ENCODE measurements at regions of chr9 and their contacts with region 1.

Region 1: DNA sequence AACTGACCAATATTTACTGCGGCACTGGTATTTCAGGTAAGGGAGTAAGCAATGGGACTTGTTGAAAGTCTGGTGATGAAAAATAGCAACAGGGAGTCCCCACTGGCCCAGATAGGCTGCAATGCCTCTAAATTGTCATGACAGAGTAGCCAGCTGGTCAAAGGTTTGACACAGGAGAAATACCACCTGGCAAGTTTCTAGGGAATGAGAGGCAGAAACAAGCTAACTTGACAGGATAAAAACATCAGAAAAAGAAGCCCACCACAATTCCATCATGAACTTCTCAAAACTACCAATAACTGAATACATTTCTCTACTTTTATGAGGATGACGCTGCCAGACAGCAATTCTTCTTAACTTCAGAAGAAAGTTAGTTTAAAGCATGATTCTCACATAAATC is 99.8 kb downstream of the STRBP start:
- DNase-seq: peak; percentile 48
- H3K4me3 ChIP-seq: peak overlapping the region; percentile 39
- H3K27ac ChIP-seq: peak overlapping the region; percentile 99
- H3K4me1 ChIP-seq: peaks cover 100% of the 10 kb centered on the region
- CTCF ChIP-seq: no peak

Region 2: GRCh38 chr9:123135430-123135829 is 33.2 kb before region 1 on chr9:
- CTCF ChIA-PET with region 1: no interaction called
- POLR2A ChIA-PET with region 1: interaction called, 6 read pairs
- intact Hi-C with region 1: loop called (anchors 2 kb)
- DNase-seq: peak; percentile 69
- H3K4me3 ChIP-seq: peak overlapping the region; percentile 11
- H3K27ac ChIP-seq: peak overlapping the region; percentile 54
- H3K4me1 ChIP-seq: peaks cover 76% of the 10 kb centered on the region
- CTCF ChIP-seq: no peak

Measured in OCI-LY7 (cell line).